ENCODE measurements at regions of chr10 and their contacts with region 1.

Region 1: GRCh38 chr10:97355571-97355975 is 21.0 kb upstream of the FRAT2 start:
- DNase-seq: no peak
- ATAC-seq: peak; percentile 58
- H3K4me3 ChIP-seq: no peak overlapping the region
- H3K27ac ChIP-seq: no peak overlapping the region
- H3K4me1 ChIP-seq: no peaks in the 10 kb centered on the region
- H3K27me3 ChIP-seq: no peaks in the 10 kb centered on the region

Region 2: GRCh38 chr10:97278491-97278989 is 77.0 kb before region 1 on chr10:
- intact Hi-C with region 1: loop called in 1 of 2 experiments (anchors 5 kb)
- DNase-seq: no peak
- ATAC-seq: peak; percentile 91
- H3K4me3 ChIP-seq: no peak overlapping the region
- H3K27ac ChIP-seq: no peak overlapping the region
- H3K4me1 ChIP-seq: peaks cover 0 to 2% of the 10 kb centered on the region in 2 donors
- H3K27me3 ChIP-seq: no peaks in the 10 kb centered on the region

Region 3: GRCh38 chr10:97400665-97401454 is 45.3 kb after region 1 on chr10 and contains the start of gene RRP12:
- intact Hi-C with region 1: no loop called
- DNase-seq: peak; percentile 86 to 89
- ATAC-seq: peak; percentile 98
- H3K4me3 ChIP-seq: peak within 1 kb of the TSS; percentile 30 to 91
- H3K27ac ChIP-seq: peak within 1 kb of the TSS in 1 of 2 donors; percentile 62
- H3K4me1 ChIP-seq: peaks cover 0 to 2% of the 10 kb centered on the region in 2 donors
- H3K27me3 ChIP-seq: no peaks in the 10 kb centered on the region
- total RNA-seq, gene RRP12: 25.1 to 31.9 TPM